ENCODE measurements at regions of chr5 and their contacts with region 1.

Region 1: DNA sequence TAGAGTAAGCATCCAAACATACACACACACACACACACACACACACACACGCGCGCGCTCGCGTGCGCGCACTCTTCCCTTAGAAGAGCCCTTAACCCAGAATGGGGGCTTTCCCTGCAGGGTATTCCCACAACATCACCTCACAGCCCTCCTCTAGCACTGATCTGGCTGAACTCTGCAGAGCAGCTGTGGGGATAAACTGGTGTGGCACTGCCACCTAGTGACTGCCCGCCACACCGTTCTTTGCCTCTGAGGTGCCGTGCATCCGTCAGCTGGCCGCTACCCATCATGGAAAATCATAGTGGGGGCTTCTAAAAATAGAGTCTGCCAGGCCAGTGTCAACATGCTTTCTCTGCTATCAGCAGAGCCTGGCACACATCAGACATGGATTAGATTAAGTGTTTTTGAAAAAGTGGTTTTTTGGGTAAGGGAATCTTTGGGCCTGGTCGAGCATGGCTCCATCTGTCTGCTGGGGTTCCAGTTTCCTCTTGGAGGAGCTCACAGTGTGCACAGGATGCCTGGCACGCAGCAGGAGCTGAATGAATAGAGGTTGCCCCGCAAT is 88.1 kb downstream of the KCNN2 start:
- DNase-seq: peak; percentile 80
- ATAC-seq: peak; percentile 99

Region 2: DNA sequence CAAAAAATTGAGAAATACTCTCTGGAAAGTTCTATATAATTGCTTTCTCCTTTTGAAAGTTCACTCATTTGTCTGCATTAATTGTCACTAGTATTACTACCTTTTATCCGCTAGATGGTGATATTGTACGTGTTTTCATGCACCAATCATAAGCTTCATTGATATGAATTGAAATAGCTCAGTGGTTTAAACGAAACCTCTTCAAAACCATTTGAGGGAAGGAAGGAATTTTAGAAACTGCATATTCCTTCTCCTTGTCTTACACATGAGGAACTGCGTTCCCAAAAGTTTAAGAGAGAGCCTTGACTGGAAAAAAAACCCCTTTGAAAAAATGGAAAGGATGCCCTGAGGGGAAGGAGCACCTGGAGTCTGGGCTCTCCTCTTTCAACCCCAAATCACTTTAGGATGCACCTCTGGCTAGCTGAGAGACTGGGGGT is 837.9 kb before region 1 on chr5:
- intact Hi-C with region 1: loop called in 1 of 2 experiments (anchors 5 kb)
- DNase-seq: no peak
- ATAC-seq: peak; percentile 28 to 58

Region 3: DNA sequence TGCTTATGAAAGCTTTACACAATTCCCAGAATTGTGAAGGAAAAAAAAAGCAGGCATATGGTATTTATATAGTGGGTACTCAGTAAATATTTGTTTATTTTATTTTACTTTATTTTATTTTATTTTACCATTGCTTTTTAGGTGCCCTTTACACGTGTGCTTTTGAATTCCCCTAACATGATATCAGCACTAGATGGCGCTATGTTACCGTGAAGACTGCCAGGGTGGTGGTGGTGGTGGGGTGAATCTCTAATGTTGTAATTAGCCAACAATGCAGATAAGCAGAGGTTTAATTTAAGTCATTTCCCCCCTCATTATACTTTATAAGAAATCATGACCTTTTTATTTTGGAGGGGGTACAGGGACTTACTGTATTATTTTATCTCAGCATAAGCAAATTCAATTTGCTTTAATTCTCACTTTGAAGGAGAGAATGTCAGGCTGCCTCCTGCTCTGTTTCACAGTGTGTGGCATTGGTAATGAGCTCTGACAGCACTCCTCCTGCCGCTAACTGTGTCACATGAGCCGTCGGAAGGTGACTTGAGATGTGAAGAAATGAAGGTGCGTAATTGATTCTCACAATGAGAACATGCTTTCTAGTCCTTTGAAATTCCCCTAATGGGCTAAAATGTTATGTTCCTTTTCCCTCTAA is 770.9 kb before region 1 on chr5:
- intact Hi-C with region 1: loop called in 1 of 2 experiments (anchors 5 kb)
- DNase-seq: no peak
- ATAC-seq: peak; percentile 65 to 79

Region 4: GRCh38 chr5:114018186-114018585 is 431.8 kb before region 1 on chr5:
- intact Hi-C with region 1: loop called in 1 of 2 experiments (anchors 10 kb)
- DNase-seq: no peak
- ATAC-seq: peak in 1 of 2 donors; percentile 50

Region 5: GRCh38 chr5:114101153-114101552 is 348.8 kb before region 1 on chr5:
- intact Hi-C with region 1: loop called in 1 of 2 experiments (anchors 5 kb)
- DNase-seq: no peak
- ATAC-seq: no peak

Region 6: DNA sequence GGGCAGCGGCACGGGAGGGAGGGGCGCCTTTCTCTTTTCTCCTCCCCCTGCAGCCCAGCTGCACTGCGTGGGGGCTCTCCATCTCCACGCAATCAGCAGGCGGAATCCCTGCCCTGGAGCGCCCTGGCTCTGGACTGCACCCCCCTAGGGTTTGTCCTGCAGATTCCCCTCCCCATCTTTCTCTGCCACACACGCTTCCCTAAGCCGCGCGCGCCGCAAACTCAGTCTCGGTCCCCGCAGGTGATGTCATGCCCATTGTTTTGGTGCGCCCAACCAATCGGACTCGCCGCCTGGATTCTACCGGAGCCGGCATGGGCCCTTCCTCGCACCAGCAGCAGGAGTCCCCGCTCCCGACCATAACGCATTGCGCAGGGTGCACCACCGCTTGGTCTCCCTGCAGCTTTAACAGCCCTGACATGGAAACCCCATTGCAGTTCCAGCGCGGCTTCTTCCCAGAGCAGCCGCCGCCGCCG is 88.2 kb before region 1 on chr5 and contains the start of gene KCNN2:
- intact Hi-C with region 1: loop called (anchors 2 to 10 kb)
- DNase-seq: peak; percentile 81
- ATAC-seq: peak; percentile 94 to 96
- total RNA-seq, gene KCNN2: 16.8 to 17.0 TPM

Region 7: DNA sequence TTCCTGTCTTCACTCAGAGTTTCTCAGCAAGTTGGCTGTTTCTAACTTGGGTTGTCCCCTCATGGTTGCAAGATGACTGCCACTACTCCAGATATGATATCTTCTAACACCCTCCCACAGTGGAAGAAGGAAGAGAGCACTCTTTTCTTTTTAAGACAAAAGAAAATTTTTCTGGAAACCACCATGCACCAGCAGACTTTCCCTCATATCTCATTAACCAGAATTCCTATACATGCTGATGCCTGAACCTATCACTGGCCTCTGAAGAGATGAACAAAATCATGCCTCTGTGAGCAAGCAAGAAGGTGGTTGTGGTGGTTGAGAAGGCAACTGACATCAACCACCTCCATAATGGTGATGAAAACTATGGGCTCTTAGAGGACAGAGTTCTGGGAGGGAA is 1037.8 kb after region 1 on chr5:
- intact Hi-C with region 1: no loop called
- DNase-seq: no peak
- ATAC-seq: no peak